ENCODE measurements at regions of chr14 and their contacts with region 1.

Region 1: DNA sequence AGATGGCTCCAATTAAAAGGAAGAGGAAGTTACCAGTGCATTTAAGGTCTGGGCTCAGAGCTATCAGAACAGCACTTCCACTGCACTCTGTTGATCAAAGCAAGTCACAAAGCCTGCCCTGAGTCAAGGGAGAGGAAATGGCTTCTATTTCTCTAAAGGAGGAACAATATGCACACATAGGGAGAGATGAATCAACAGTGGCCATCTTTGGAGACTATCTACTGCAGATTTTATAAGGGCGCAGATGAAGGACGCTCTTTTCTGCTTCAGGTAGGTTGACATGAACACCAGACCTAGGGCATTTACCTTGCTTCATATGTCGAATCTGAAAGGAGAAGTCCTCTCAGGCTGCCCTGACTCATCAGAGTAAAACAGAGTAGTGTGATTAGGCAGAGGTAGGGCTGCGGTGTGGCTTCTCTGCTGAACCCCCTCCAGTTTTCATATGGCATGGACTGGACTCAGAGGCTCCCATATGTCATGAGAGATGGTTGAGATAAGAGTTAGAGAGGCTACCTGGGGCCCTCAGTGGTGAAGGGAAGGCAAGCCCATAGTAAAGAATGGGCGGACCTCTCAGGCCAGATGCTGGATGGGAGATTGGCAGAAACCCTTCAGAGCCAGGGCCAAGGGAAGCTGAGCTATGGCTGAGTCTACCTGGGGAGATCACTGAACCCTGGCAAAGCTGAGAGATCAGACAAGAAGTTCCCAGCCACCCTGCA is 84.4 kb downstream of the ARF6 start:
- DNase-seq: peak; percentile 81
- H3K4me3 Mint-ChIP-seq: peak overlapping the region; percentile 69
- H3K27ac Mint-ChIP-seq: peak overlapping the region; percentile 91
- H3K4me1 Mint-ChIP-seq: peaks cover 73% of the 10 kb centered on the region
- H3K27me3 Mint-ChIP-seq: no peaks in the 10 kb centered on the region

Region 2: DNA sequence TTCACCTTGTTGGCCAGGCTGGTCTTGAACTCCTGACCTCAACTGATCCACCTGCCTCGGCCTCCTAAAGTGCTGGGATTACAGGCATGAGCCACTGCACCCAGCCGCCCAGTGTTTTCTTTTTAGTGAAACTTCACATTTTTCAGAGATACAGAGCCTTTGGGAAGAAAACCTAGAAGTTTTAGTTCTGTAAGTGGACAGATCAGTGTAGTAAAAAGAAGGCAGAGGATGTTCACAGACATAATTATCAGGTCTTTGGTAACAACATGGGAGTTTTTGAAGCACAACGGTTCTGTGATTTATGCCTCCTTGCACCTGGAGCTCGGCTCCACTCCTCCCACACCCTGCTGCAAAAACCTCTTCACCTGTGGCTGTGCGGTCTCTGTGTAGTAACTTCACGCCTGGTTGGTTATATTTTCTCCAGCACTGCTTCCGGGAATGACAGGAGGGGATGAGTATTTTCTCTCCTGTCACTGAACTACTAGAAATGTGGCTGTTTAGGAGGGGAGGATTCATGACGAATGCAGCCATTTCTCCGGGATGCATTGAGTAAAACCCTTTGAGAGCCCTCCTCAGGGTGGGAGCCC is 17.4 kb before region 1 on chr14:
- intact Hi-C with region 1: loop called (anchors 2 kb)
- DNase-seq: peak; percentile 74
- H3K4me3 Mint-ChIP-seq: peak overlapping the region; percentile 39
- H3K27ac Mint-ChIP-seq: peak overlapping the region; percentile 18
- H3K4me1 Mint-ChIP-seq: peaks cover 39% of the 10 kb centered on the region
- H3K27me3 Mint-ChIP-seq: no peaks in the 10 kb centered on the region

Region 3: DNA sequence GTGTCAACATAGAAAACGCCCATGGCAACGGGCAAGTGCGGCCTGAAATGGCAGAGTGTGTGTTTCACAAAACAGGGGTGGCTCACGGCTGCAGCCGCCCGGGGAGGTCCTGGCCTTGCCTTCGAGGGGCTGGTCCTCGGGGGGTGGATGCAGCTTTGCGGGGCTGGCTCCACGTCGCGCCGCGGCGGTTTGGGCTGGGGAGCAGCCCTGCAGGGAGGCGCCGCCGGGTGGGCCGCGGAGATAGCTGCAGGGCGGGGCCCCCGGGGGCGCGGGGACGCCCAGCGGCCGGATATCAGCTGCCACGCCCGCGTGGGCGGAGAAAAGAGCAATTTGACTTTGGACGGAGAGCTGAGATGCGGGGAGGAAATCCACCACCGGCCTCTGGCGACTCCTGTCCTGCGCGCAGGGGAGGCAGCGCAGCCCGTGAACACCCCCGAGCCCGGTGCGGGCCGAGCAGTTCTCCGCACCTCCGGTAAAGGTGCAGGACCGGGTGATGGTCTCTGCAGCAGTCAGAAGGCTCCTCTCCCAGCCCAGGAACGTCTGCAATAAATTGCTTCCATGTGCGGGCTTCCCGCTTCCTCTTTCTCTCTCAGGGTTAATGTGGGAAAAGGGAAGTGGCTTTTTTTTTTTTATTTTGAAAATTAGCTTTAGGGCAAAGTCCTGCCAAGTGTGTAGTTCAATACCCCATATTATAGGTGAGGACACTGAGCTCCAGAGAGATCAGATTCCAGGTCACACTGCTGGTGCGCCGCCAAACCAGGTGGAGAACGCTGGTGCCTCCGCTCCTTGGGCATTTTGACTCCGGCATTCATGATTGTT is 26.1 kb after region 1 on chr14:
- intact Hi-C with region 1: no loop called
- DNase-seq: peak; percentile 95
- H3K4me3 Mint-ChIP-seq: peak overlapping the region; percentile 83
- H3K27ac Mint-ChIP-seq: peak overlapping the region; percentile 96
- H3K4me1 Mint-ChIP-seq: peaks cover 58% of the 10 kb centered on the region
- H3K27me3 Mint-ChIP-seq: no peaks in the 10 kb centered on the region